Panc1 (cell line): ENCODE measurements at regions of chr13 and their contacts with region 1.

Region 1: GRCh38 chr13:59024434-59024833 is 1139.3 kb downstream of the DIAPH3 start:
- DNase-seq: no peak
- ATAC-seq: no peak
- H3K4me3 ChIP-seq: no peak overlapping the region
- H3K27ac ChIP-seq: no peak overlapping the region
- H3K4me1 ChIP-seq: no peaks in the 10 kb centered on the region
- H3K27me3 ChIP-seq: no peaks in the 10 kb centered on the region
- CTCF ChIP-seq: no peak

Region 2: DNA sequence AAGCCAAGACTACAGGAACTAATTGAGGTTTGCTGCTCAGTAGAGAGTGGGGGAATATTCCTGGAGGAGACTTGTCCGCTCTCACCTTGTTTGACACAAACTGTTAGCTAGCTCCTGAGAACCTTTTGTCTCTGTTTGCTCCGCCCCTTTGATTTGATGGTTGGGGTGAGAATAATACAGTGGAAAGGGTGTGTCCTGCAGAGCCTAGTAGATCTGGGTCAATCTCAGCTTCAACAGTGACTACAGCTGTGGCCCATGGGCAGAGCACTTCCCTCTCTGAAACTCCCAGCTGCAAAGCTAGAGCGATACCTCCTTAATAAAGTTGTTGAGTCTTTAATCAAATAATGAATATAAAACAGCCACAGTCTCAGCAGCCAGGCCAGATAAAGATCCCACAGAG is 562.6 kb after region 1 on chr13:
- CTCF ChIA-PET with region 1: no interaction called
- POLR2A ChIA-PET with region 1: interaction called, 19 read pairs
- in situ Hi-C with region 1: no loop called
- intact Hi-C with region 1: no loop called
- DNase-seq: no peak
- ATAC-seq: no peak
- H3K4me3 ChIP-seq: no peak overlapping the region
- H3K27ac ChIP-seq: no peak overlapping the region
- H3K4me1 ChIP-seq: no peaks in the 10 kb centered on the region
- H3K27me3 ChIP-seq: no peaks in the 10 kb centered on the region
- CTCF ChIP-seq: no peak